Esophagus muscularis mucosa (tissue), 4 donors: ENCODE measurements at regions of chr22 and their contacts with region 1.

Region 1: DNA sequence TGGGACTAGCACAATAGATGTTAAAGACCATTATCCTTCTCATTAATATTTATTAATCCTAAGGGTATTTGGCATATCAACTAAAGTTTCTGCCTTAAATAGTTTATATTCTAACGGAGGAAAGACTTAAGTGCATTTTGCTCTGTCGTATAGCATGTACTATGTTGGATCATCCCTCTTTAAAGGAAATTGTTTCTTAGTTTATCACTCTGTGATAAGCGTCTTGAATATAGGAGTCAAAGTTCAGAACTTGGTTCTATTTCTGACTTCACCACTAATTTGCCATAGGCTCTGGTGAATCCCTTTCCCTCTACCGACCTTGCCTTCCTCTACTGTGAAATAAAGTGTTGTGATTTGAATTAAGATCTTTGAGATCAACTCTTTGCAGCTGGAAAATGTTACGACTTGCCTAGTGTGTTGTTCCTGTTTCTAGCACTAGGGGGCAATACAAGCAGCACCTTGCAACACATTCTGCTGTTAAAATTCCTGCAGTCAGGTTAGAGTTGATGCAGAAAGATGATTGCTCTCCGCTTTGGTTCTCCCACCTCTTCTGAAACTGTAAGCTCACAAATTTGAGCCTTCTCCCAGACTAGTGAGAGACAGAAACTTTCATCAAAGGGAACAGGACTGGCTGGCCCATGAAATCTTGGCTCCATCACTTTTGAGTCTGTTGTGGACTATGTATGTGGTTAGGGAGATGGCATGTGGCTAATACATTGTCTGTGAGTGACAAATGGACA is 27.8 kb upstream of the ZNRF3 start:
- DNase-seq: no peak
- H3K4me3 ChIP-seq: no peak overlapping the region
- H3K27ac ChIP-seq: no peak overlapping the region
- H3K4me1 ChIP-seq: peaks cover 3 to 8% (median 6%) of the 10 kb centered on the region in 4 donors
- H3K27me3 ChIP-seq: no peaks in the 10 kb centered on the region
- CTCF ChIP-seq: peak; percentile 95 to 96 (median 96)
- EP300 ChIP-seq: no peak
- POLR2A ChIP-seq: no peak

Region 2: GRCh38 chr22:28629420-28630176 is 225.9 kb before region 1 on chr22:
- intact Hi-C with region 1: no loop called
- DNase-seq: no peak
- H3K4me3 ChIP-seq: no peak overlapping the region
- H3K27ac ChIP-seq: no peak overlapping the region
- H3K4me1 ChIP-seq: no peaks in the 10 kb centered on the region
- H3K27me3 ChIP-seq: no peaks in the 10 kb centered on the region
- CTCF ChIP-seq: no peak
- EP300 ChIP-seq: no peak
- POLR2A ChIP-seq: no peak

Region 3: GRCh38 chr22:28817919-28818909 is 37.3 kb before region 1 on chr22:
- intact Hi-C with region 1: no loop called
- DNase-seq: no peak
- H3K4me3 ChIP-seq: no peak overlapping the region
- H3K27ac ChIP-seq: peak overlapping the region in 2 of 4 donors; percentile 20 to 54
- H3K4me1 ChIP-seq: peaks cover 11 to 27% (median 19%) of the 10 kb centered on the region in 4 donors
- H3K27me3 ChIP-seq: no peaks in the 10 kb centered on the region
- CTCF ChIP-seq: no peak
- EP300 ChIP-seq: no peak
- POLR2A ChIP-seq: no peak

Region 4: DNA sequence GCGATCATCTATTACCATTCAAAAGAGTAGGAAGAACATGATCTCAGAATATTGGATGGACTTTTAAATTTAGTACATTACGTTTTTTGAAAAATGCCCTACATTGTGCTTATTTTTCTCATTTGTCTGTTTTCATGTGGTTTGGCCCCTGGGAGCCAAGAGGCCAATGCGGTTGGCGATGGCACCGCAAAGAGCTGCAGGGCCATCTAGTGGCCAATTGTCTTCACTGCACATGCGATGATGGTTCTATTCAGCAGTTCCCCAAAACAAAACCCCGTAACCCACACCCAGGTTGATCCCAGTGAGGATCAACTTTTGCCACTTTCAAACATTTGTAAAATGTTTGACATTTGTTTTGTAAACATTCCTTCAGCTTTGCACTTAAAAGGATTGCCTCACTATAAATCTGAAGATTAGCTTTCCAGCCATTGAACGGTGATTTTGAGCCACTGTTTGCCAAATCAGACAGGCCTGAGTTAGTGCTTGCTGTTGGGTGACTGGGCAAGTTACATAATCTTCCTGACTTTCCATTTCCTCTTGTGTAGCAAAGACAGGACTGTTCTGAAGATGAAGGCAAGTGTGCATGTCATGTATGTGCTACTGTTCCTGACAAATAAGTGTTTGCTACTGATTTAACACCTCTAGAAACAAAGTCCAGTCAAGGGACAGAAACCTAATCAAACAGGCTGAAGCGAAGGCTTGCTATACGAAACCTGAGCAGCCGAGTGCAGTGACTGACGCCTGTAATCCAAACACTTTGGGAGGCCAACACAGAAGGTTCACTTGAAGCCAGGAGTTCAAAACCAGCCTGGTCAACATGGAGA is 26.0 kb before region 1 on chr22:
- intact Hi-C with region 1: no loop called
- DNase-seq: peak; percentile 93
- H3K4me3 ChIP-seq: no peak overlapping the region
- H3K27ac ChIP-seq: peak overlapping the region in 3 of 4 donors; percentile 5 to 55 (median 9)
- H3K4me1 ChIP-seq: peaks cover 9 to 16% (median 13%) of the 10 kb centered on the region in 4 donors
- H3K27me3 ChIP-seq: no peaks in the 10 kb centered on the region
- CTCF ChIP-seq: peak; percentile 97 to 98 (median 98)
- EP300 ChIP-seq: no peak
- POLR2A ChIP-seq: no peak

Region 5: GRCh38 chr22:28951969-28952521 is 96.5 kb after region 1 on chr22:
- intact Hi-C with region 1: loop called (anchors 5 kb)
- DNase-seq: no peak
- H3K4me3 ChIP-seq: peak overlapping the region in 1 of 4 donors; percentile 18
- H3K27ac ChIP-seq: peak overlapping the region; percentile 15 to 67 (median 41)
- H3K4me1 ChIP-seq: peaks cover 15 to 71% (median 57%) of the 10 kb centered on the region in 4 donors
- H3K27me3 ChIP-seq: no peaks in the 10 kb centered on the region
- CTCF ChIP-seq: peak; percentile 34 to 63 (median 54)
- EP300 ChIP-seq: no peak
- POLR2A ChIP-seq: no peak

Region 6: GRCh38 chr22:29040385-29041275 is 185.1 kb after region 1 on chr22:
- intact Hi-C with region 1: loop called (anchors 2 kb)
- DNase-seq: no peak
- H3K4me3 ChIP-seq: no peak overlapping the region
- H3K27ac ChIP-seq: no peak overlapping the region
- H3K4me1 ChIP-seq: peaks cover 10 to 25% (median 19%) of the 10 kb centered on the region in 4 donors
- H3K27me3 ChIP-seq: no peaks in the 10 kb centered on the region
- CTCF ChIP-seq: peak; percentile 92 to 99 (median 98)
- EP300 ChIP-seq: no peak
- POLR2A ChIP-seq: no peak

Region 7: GRCh38 chr22:29154364-29155048 is 299.0 kb after region 1 on chr22:
- intact Hi-C with region 1: loop called (anchors 10 kb)
- DNase-seq: no peak
- H3K4me3 ChIP-seq: peak overlapping the region in 3 of 4 donors; percentile 20 to 34 (median 33)
- H3K27ac ChIP-seq: no peak overlapping the region
- H3K4me1 ChIP-seq: peaks cover 6 to 45% (median 32%) of the 10 kb centered on the region in 4 donors
- H3K27me3 ChIP-seq: peaks cover 0 to 8% (median 0%) of the 10 kb centered on the region in 4 donors
- CTCF ChIP-seq: peak; percentile 77 to 97 (median 85)
- EP300 ChIP-seq: no peak
- POLR2A ChIP-seq: no peak

Region 8: GRCh38 chr22:29245637-29246385 is 390.3 kb after region 1 on chr22:
- intact Hi-C with region 1: loop called (anchors 10 kb)
- DNase-seq: no peak
- H3K4me3 ChIP-seq: no peak overlapping the region
- H3K27ac ChIP-seq: no peak overlapping the region
- H3K4me1 ChIP-seq: peaks cover 0 to 8% (median 1%) of the 10 kb centered on the region in 4 donors
- H3K27me3 ChIP-seq: no peaks in the 10 kb centered on the region
- CTCF ChIP-seq: peak; percentile 93 to 100 (median 94)
- EP300 ChIP-seq: no peak
- POLR2A ChIP-seq: no peak